ENCODE measurements at regions of chr17 and their contacts with region 1.

Region 1: DNA sequence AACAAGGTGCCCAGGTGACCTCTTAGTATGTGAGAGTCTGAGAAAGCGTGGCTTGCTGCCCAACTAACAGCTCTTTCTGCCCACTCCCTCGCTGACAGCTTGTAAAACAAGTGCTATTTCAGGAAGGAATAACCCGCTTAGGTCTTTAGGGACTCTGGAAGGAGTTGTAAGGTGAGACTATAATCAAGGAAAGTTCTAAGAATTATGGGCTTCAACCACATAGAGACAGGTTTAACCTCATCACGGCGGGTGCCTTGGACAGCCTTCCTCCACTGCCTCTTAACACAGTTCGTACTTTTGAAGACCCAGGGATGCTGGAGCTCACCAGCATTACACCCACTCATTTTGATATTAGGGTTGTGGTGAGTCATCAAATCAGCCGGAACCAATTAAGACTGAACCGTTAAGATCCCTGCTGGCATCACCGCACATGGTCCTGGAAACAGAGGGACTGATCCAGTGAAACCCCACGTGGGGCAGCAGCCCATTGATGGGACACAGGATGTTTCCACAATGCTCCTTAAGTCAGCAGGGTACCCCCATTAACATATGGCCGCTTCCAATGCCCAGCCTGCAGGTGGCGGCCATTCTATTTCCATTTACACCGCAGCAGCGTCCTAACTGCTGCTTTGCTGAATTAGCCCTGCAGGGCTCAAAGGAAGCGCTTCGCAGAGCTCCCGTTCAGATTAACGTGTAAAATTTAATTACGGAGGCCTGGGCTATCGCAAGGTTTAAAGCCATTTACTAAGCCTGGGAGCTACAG is 176.6 kb upstream of the SDK2 start:
- DNase-seq: peak; percentile 37
- H3K4me3 ChIP-seq: no peak overlapping the region
- H3K27ac ChIP-seq: no peak overlapping the region
- H3K4me1 ChIP-seq: no peaks in the 10 kb centered on the region
- H3K27me3 ChIP-seq: no peaks in the 10 kb centered on the region
- CTCF ChIP-seq: peak; percentile 37

Region 2: DNA sequence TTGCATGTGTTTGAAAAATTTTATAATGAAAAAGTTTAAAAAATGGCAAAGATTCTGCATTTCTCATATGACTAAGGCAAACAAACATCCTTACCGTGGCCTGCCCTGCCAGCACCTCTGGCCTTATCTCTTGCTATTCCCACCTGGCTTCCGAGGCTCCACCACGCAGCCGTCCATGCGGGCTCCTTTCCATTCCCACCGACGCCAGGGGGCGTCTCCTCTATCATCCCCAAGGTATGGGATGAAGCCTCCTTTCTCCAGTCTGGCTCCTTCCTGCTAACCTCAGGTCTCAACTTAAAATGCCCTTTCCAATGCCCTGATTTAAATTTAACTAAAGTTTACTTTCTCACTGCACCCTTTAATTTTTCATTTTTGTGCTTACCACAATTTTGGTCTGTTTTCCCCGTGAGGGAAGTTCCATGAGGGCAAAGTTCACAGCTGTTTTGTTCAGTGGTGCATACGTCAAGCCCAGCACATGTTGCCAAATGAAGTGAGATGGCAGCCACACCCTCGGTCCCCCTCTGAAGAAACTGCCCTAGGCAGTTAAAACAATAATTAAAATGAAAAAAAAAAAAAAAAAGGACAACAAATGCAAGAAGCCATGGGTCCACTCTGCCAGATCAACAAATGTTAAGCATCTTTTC is 163.3 kb before region 1 on chr17:
- intact Hi-C with region 1: no loop called
- DNase-seq: peak; percentile 77
- H3K4me3 ChIP-seq: no peak overlapping the region
- H3K27ac ChIP-seq: no peak overlapping the region
- H3K4me1 ChIP-seq: no peaks in the 10 kb centered on the region
- H3K27me3 ChIP-seq: no peaks in the 10 kb centered on the region
- CTCF ChIP-seq: peak; percentile 55

Region 3: GRCh38 chr17:73731733-73732132 is 89.1 kb before region 1 on chr17:
- intact Hi-C with region 1: no loop called
- DNase-seq: no peak
- H3K4me3 ChIP-seq: no peak overlapping the region
- H3K27ac ChIP-seq: no peak overlapping the region
- H3K4me1 ChIP-seq: no peaks in the 10 kb centered on the region
- H3K27me3 ChIP-seq: no peaks in the 10 kb centered on the region
- CTCF ChIP-seq: no peak

Region 4: GRCh38 chr17:73998653-73999645 is 178.1 kb after region 1 on chr17:
- intact Hi-C with region 1: loop called (anchors 5 kb)
- DNase-seq: peak; percentile 79
- H3K4me3 ChIP-seq: no peak overlapping the region
- H3K27ac ChIP-seq: no peak overlapping the region
- H3K4me1 ChIP-seq: no peaks in the 10 kb centered on the region
- H3K27me3 ChIP-seq: no peaks in the 10 kb centered on the region
- CTCF ChIP-seq: peak; percentile 88

Measured in colonic mucosa (tissue), 4 donors.